Heart left ventricle (tissue), 16 donors: ENCODE measurements at regions of chrX and their contacts with region 1.

Region 1: DNA sequence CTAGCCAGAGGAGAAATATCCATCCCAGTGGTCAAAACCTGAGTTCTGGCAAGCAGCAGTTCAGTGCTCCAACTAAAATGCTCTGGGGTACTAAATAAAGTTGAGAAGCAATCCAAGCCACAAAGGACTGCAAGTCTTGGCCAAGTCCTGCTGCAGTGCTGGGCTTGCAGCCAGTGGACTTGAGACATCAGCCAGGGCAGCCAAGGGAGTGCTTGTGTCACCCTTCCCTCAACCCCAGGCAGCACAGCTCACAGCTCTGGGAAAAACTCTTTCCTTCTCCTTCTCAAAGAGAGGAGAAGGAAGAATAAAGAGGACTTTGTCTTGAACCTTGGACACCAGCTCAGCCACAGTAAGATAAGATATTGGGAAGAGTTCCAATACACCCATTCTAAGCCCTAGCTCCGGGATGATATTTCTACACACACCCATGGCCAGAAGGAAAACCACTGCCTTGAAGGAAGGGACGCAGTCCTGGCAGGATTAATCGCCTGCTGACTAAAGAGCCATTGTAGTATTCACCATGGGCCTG is 99.8 kb downstream of the PTCHD1 start:
- DNase-seq: peak; percentile 66 to 84 (median 79)
- ATAC-seq: peak; percentile 73 to 94 (median 90)
- H3K4me3 ChIP-seq: no peak overlapping the region
- H3K27ac ChIP-seq: peak overlapping the region in 5 of 12 donors; percentile 42 to 61 (median 49)
- H3K4me1 ChIP-seq: peaks cover 0 to 8% (median 0%) of the 10 kb centered on the region in 12 donors
- H3K27me3 ChIP-seq: peaks cover 0 to 6% (median 0%) of the 10 kb centered on the region in 9 donors
- CTCF ChIP-seq: no peak
- POLR2A ChIP-seq: no peak

Region 2: DNA sequence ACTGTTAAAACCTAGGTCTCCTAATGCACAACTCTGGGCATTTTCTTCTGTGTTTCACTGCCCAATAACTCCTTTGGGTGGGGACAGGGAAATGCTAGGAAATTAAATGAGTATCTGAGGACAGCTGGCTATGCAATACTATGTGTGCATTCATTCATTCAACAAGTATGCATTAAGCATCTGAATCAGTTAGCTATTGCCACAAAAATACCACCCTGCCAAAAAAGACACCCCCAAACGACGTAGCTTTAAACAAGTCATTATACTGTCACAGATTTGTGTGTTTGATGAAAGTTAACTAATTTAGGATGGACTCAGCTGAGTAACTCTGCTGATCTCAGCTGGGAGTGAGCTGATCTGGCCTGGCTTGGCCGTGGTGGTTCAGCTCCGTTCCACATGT is 129.5 kb before region 1 on chrX:
- intact Hi-C with region 1: no loop called
- DNase-seq: no peak
- ATAC-seq: no peak
- H3K4me3 ChIP-seq: no peak overlapping the region
- H3K27ac ChIP-seq: no peak overlapping the region
- H3K4me1 ChIP-seq: no peaks in the 10 kb centered on the region
- H3K27me3 ChIP-seq: peaks cover 0 to 7% (median 0%) of the 10 kb centered on the region in 9 donors
- CTCF ChIP-seq: no peak
- POLR2A ChIP-seq: no peak

Region 3: GRCh38 chrX:23341452-23341851 is 93.0 kb before region 1 on chrX:
- intact Hi-C with region 1: no loop called
- DNase-seq: no peak
- ATAC-seq: no peak
- H3K4me3 ChIP-seq: no peak overlapping the region
- H3K27ac ChIP-seq: no peak overlapping the region
- H3K4me1 ChIP-seq: no peaks in the 10 kb centered on the region
- H3K27me3 ChIP-seq: peaks cover 0 to 49% (median 0%) of the 10 kb centered on the region in 9 donors
- CTCF ChIP-seq: no peak
- POLR2A ChIP-seq: no peak

Region 4: GRCh38 chrX:23373129-23373804 is 61.2 kb before region 1 on chrX:
- intact Hi-C with region 1: loop called in 1 of 10 experiments (anchors 2 kb)
- DNase-seq: no peak
- ATAC-seq: peak; percentile 64 to 82 (median 70)
- H3K4me3 ChIP-seq: no peak overlapping the region
- H3K27ac ChIP-seq: peak overlapping the region in 6 of 12 donors; percentile 30 to 61 (median 42)
- H3K4me1 ChIP-seq: peaks cover 0 to 12% (median 0%) of the 10 kb centered on the region in 12 donors
- H3K27me3 ChIP-seq: peaks cover 0 to 21% (median 0%) of the 10 kb centered on the region in 9 donors
- CTCF ChIP-seq: no peak
- POLR2A ChIP-seq: no peak

Region 5: GRCh38 chrX:23465105-23465791 is 30.8 kb after region 1 on chrX:
- intact Hi-C with region 1: no loop called
- DNase-seq: no peak
- ATAC-seq: no peak
- H3K4me3 ChIP-seq: no peak overlapping the region
- H3K27ac ChIP-seq: no peak overlapping the region
- H3K4me1 ChIP-seq: no peaks in the 10 kb centered on the region
- H3K27me3 ChIP-seq: peaks cover 0 to 3% (median 0%) of the 10 kb centered on the region in 9 donors
- CTCF ChIP-seq: no peak
- POLR2A ChIP-seq: no peak